Aorta (tissue), 5 donors: ENCODE measurements at regions of chr11 and their contacts with region 1.

Region 1: DNA sequence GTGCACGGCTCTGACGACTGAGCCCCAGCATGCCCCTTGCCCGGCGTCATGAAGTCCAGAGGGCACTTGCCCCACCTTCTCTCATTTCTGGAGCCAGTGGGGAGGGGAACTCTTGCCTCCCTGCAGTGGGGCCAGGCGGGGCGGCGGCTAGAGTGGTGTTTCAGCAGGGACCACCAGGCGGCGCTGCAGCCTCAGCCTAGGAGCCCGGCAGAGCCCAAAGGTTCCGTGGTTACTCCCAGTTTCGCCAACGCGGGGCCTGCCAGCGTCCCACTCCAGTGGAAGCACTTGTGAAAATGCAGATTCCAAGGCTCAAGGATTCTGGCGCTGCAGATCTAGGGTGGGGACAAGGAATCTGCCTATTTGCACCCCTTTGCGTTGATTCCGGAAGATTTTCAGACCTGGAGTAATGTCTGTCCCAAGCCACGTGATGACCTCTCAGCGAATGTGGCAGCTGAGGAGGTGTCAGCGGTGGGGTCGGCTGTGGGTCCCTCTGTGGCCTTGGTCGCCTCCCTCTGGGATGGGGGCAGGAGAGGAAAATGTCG is 55.7 kb downstream of the CD82 start:
- DNase-seq: peak; percentile 81 to 95
- ATAC-seq: peak; percentile 89
- H3K4me3 ChIP-seq: no peak overlapping the region
- H3K27ac ChIP-seq: no peak overlapping the region
- H3K4me1 ChIP-seq: no peaks in the 10 kb centered on the region
- H3K27me3 ChIP-seq: no peaks in the 10 kb centered on the region

Region 2: GRCh38 chr11:44269369-44270351 is 351.6 kb before region 1 on chr11:
- intact Hi-C with region 1: no loop called
- DNase-seq: no peak
- ATAC-seq: peak; percentile 21
- H3K4me3 ChIP-seq: no peak overlapping the region
- H3K27ac ChIP-seq: no peak overlapping the region
- H3K4me1 ChIP-seq: no peaks in the 10 kb centered on the region
- H3K27me3 ChIP-seq: no peaks in the 10 kb centered on the region

Region 3: DNA sequence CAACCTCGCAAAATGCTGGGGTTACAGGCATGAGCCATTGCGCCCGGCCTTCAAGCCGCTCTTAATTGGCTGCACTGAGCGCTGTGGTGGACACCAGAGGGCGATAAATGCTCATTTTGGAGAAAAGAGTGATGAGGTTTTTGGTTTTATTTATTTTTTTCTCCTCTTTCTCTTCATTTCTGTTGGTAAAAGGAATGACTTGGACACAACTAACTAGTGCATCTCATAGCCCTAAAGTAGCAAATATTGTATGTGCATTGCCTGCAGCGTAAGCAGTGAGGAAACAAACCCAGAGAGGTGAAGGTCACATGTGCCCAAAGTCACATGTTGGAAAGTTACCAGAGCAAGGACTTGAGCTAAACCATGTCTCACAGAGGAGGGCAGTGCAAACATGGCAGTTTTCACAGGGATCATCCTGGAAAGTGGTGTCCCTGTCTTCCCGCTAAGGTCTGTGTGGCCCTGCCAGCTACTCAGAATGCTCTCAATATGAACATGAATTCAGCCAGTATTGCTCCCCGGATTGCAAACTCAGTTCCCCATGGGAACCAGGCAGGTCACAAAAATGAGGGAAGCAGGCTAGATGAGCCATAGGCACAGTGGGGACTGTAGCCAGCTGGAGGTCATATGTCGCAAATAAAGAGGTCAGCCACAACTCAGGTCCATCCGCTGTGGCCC is 64.3 kb before region 1 on chr11:
- intact Hi-C with region 1: loop called (anchors 1 kb)
- DNase-seq: peak; percentile 80 to 84
- ATAC-seq: peak; percentile 81
- H3K4me3 ChIP-seq: no peak overlapping the region
- H3K27ac ChIP-seq: no peak overlapping the region
- H3K4me1 ChIP-seq: no peaks in the 10 kb centered on the region
- H3K27me3 ChIP-seq: no peaks in the 10 kb centered on the region

Region 4: DNA sequence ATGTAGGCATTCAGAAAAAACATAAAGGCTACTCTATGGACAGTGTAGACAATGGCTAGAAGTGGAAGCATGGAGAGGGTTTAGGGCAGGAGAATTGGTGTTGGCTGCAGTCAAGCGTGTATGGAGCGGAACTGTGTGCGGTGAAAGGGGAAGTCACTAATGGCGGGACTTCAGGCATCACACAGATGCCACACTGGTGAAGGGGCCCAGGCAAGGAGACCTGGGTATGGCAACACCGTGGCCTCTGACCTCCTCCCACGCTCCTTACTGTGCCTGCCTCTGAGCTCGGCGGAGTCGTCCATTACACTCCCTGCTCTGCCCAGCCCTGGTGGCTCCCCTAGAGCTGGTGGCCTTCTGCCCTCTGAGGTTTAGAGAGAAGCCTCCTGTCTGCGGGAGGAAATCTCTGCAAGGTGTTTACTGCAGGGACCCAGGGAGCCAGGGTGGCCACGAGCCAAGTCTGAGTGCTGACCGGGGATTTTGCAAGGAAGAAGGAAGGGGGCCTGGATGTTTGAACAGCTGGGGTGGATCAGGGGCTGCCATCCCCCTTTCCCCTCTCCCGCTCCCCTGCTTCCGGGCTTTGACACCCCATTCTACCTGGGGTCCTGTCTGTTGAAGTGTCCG is 30.4 kb after region 1 on chr11:
- intact Hi-C with region 1: no loop called
- DNase-seq: no peak
- ATAC-seq: no peak
- H3K4me3 ChIP-seq: no peak overlapping the region
- H3K27ac ChIP-seq: no peak overlapping the region
- H3K4me1 ChIP-seq: no peaks in the 10 kb centered on the region
- H3K27me3 ChIP-seq: no peaks in the 10 kb centered on the region

Region 5: GRCh38 chr11:44893846-44894617 is 272.8 kb after region 1 on chr11:
- intact Hi-C with region 1: loop called (anchors 1 to 5 kb)
- DNase-seq: peak; percentile 75 to 93
- ATAC-seq: peak; percentile 87
- H3K4me3 ChIP-seq: no peak overlapping the region
- H3K27ac ChIP-seq: no peak overlapping the region
- H3K4me1 ChIP-seq: no peaks in the 10 kb centered on the region
- H3K27me3 ChIP-seq: peaks cover 0 to 2% of the 10 kb centered on the region in 2 donors

Region 6: GRCh38 chr11:44911029-44911814 is 290.0 kb after region 1 on chr11:
- intact Hi-C with region 1: loop called (anchors 1 to 2 kb)
- DNase-seq: peak; percentile 90 to 93
- ATAC-seq: peak; percentile 89
- H3K4me3 ChIP-seq: no peak overlapping the region
- H3K27ac ChIP-seq: no peak overlapping the region
- H3K4me1 ChIP-seq: no peaks in the 10 kb centered on the region
- H3K27me3 ChIP-seq: no peaks in the 10 kb centered on the region

Region 7: DNA sequence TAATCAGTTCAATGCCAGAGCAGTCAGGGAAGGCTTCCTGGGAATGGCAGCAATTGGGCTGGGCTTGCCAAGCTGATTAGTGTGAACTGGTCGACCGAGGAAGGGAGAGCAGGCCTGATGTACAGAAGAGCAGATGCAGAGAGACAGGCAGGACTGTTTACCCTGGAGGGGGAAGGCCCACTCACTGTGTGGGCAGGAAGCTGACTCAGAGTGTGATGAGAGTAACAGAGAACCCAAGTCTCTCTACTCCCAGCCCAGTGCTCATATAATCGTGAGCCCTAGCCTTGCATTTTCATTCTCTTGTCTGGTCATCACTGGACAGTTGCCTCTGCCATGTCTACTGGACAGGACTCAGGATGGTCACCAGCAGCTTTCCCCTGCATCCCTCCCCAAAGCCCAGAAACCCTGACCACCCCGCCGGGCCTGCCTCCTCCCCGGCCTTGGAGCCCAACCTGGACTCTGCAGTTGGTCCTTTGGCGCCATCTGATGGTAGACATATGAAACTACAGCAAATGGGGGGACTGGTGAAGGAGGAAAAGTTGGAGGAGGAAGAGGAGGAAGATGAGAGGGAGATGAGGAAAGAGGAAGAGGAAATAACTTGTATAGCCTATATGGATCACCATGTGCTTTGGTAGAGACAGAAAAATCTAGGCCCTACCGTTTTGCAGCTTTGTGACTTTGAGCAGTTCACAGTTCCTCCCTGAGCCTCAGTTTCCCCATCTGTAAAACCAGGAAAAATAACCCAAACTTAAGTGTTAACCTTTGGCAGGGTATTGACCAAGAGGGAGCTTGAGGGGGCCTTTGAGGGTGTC is 481.8 kb after region 1 on chr11:
- intact Hi-C with region 1: loop called in 1 of 2 experiments (anchors 10 kb)
- DNase-seq: peak; percentile 71 to 84
- ATAC-seq: peak; percentile 80
- H3K4me3 ChIP-seq: no peak overlapping the region
- H3K27ac ChIP-seq: no peak overlapping the region
- H3K4me1 ChIP-seq: peaks cover 0 to 2% of the 10 kb centered on the region in 2 donors
- H3K27me3 ChIP-seq: no peaks in the 10 kb centered on the region